Activated B cell treated with CpG ODN at 0.5 μM for 24 hours (primary cell): ENCODE measurements at regions of chr14 and their contacts with region 1.

Region 1: DNA sequence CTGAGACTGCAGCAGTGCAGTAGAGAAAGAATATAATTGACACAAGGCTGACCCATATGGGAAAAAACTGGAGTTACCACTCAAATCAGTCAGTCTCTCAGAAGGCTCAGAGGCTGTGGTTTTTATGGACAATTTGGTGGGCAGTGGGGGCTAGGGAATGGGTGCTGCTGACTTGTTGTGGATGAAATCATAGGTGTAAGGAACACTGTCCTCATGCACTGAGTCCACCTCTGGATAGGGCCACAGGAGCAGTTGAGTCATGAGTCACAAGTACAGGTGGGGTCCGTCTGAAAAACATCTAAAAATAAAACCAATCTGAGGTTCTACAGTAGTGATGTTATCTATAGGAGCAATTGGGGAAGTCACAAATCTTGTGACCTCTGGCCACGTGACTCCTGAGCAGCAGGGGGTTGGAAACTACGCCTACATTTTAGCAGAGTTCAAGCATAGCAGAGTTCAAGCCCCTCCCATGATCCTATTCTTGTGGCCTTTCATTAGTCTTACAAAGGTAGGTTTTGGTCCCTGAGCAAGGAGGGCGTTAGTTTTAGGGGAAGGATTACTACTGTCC is 18.1 kb upstream of the SGPP1 start:
- DNase-seq: peak; percentile 36
- ATAC-seq: peak; percentile 75
- H3K4me3 Mint-ChIP-seq: peak overlapping the region; percentile 63
- H3K27ac Mint-ChIP-seq: peak overlapping the region; percentile 96
- H3K4me1 Mint-ChIP-seq: peaks cover 47% of the 10 kb centered on the region
- H3K27me3 Mint-ChIP-seq: no peaks in the 10 kb centered on the region
- CTCF ChIP-seq: no peak

Region 2: GRCh38 chr14:63705561-63706070 is 40.3 kb before region 1 on chr14:
- CTCF ChIA-PET with region 1: no interaction called
- POLR2A ChIA-PET with region 1: interaction called, 12 read pairs
- intact Hi-C with region 1: loop called (anchors 2 kb)
- DNase-seq: no peak
- ATAC-seq: peak; percentile 75
- H3K4me3 Mint-ChIP-seq: peak overlapping the region; percentile 52
- H3K27ac Mint-ChIP-seq: peak overlapping the region; percentile 83
- H3K4me1 Mint-ChIP-seq: peaks cover 80% of the 10 kb centered on the region
- H3K27me3 Mint-ChIP-seq: no peaks in the 10 kb centered on the region
- CTCF ChIP-seq: no peak

Region 3: GRCh38 chr14:63760014-63760413 is 14.1 kb after region 1 on chr14:
- CTCF ChIA-PET with region 1: no interaction called
- POLR2A ChIA-PET with region 1: interaction called, 11 read pairs
- intact Hi-C with region 1: loop called (anchors 2 kb)
- DNase-seq: no peak
- ATAC-seq: peak; percentile 71
- H3K4me3 Mint-ChIP-seq: peak overlapping the region; percentile 61
- H3K27ac Mint-ChIP-seq: peak overlapping the region; percentile 83
- H3K4me1 Mint-ChIP-seq: peaks cover 10% of the 10 kb centered on the region
- H3K27me3 Mint-ChIP-seq: no peaks in the 10 kb centered on the region
- CTCF ChIP-seq: no peak